PC-9 (cell line): ENCODE measurements at regions of chr14 and their contacts with region 1.

Region 1: GRCh38 chr14:54338696-54339317 is 58.0 kb upstream of the CDKN3 start:
- DNase-seq: peak; percentile 39 to 57
- H3K4me3 ChIP-seq: no peak overlapping the region
- H3K27ac ChIP-seq: no peak overlapping the region
- H3K4me1 ChIP-seq: peaks cover 13% of the 10 kb centered on the region
- H3K27me3 ChIP-seq: no peaks in the 10 kb centered on the region
- CTCF ChIP-seq: peak; percentile 73

Region 2: GRCh38 chr14:53432378-53432802 is 906.4 kb before region 1 on chr14:
- CTCF ChIA-PET with region 1: no interaction called
- POLR2A ChIA-PET with region 1: no interaction called
- intact Hi-C with region 1: loop called (anchors 2 kb)
- DNase-seq: peak in 1 of 2 experiments; percentile 25
- H3K4me3 ChIP-seq: no peak overlapping the region
- H3K27ac ChIP-seq: no peak overlapping the region
- H3K4me1 ChIP-seq: no peaks in the 10 kb centered on the region
- H3K27me3 ChIP-seq: no peaks in the 10 kb centered on the region
- CTCF ChIP-seq: peak; percentile 82

Region 3: GRCh38 chr14:53539489-53540126 is 799.2 kb before region 1 on chr14:
- CTCF ChIA-PET with region 1: interaction called, 8 read pairs
- POLR2A ChIA-PET with region 1: no interaction called
- intact Hi-C with region 1: loop called (anchors 1 kb)
- DNase-seq: peak; percentile 45 to 74
- H3K4me3 ChIP-seq: no peak overlapping the region
- H3K27ac ChIP-seq: no peak overlapping the region
- H3K4me1 ChIP-seq: no peaks in the 10 kb centered on the region
- H3K27me3 ChIP-seq: no peaks in the 10 kb centered on the region
- CTCF ChIP-seq: peak; percentile 88

Region 4: GRCh38 chr14:54025661-54026060 is 313.1 kb before region 1 on chr14:
- CTCF ChIA-PET with region 1: no interaction called
- POLR2A ChIA-PET with region 1: no interaction called
- intact Hi-C with region 1: loop called (anchors 1 kb)
- DNase-seq: no peak
- H3K4me3 ChIP-seq: no peak overlapping the region
- H3K27ac ChIP-seq: no peak overlapping the region
- H3K4me1 ChIP-seq: no peaks in the 10 kb centered on the region
- H3K27me3 ChIP-seq: no peaks in the 10 kb centered on the region
- CTCF ChIP-seq: peak; percentile 60